Posterior vena cava (tissue), 2 donors: ENCODE measurements at regions of chr11 and their contacts with region 1.

Region 1: DNA sequence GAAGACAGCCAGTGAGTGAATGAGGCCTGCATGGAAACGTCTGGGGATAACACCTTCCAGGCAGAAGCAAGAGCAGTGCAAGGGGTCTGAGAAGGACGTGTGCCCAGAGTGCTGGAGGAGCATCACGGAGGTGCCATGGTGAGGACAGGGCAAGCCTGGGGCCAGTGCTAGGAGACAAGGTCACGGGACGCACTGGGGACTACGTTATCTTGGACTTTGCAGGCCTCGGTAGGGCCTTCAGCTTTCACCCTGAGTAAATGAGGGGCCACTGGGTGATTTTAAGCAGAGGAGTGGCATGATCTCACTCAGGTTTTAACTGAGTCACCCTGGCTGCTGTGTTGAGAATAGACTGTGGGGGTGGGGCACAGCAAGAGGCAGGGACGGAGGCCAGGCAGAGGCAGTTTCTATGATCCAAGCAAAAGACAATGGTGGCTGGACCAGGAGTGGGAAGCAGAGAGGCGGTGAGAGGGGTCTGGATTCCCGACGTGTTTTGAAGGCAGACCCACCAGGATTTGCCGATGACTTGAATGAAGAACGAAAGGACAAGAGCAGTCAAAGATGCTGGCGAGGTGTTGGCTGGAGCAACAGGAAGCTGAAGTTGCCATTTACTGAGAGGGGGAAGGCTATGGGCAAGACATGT is 102.7 kb upstream of the PARVA start:
- DNase-seq: peak; percentile 45

Region 2: DNA sequence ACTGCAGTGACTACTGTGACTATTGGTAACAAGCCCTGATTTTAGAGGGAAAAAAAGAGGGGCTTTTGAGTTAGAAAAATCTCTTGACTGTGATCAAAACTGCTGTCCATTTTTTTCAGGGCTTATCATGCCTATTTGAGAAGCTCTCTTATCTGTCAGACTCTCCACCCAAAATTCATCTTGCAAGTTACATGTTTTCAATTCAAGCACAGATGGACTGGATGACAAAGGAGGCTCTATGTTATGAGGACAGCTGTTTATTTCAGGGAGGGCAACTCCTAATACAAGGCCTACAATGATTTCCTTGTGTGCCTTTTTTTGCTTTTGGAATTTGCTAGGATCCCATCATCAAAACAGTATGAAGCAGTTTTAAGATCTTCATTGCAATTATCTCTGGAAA is 468.1 kb before region 1 on chr11:
- intact Hi-C with region 1: loop called in 1 of 2 experiments (anchors 10 kb)
- DNase-seq: no peak

Region 3: GRCh38 chr11:11946180-11946579 is 328.5 kb before region 1 on chr11:
- intact Hi-C with region 1: loop called in 1 of 2 experiments (anchors 10 kb)
- DNase-seq: no peak

Region 4: GRCh38 chr11:12087075-12088004 is 187.3 kb before region 1 on chr11:
- intact Hi-C with region 1: loop called in 1 of 2 experiments (anchors 10 kb)
- DNase-seq: no peak